ENCODE measurements at regions of chr22 and their contacts with region 1.

Region 1: GRCh38 chr22:19218541-19219233 is 40.2 kb upstream of the SLC25A1 start:
- DNase-seq: peak in 2 of 5 donors; percentile 20 to 46
- ATAC-seq: peak; percentile 66 to 87 (median 84)
- H3K4me3 ChIP-seq: no peak overlapping the region
- H3K27ac ChIP-seq: peak overlapping the region in 11 of 12 donors; percentile 19 to 83 (median 63)
- H3K4me1 ChIP-seq: peaks cover 2 to 24% (median 10%) of the 10 kb centered on the region in 12 donors
- H3K27me3 ChIP-seq: no peaks in the 10 kb centered on the region
- CTCF ChIP-seq: no peak
- POLR2A ChIP-seq: no peak

Region 2: GRCh38 chr22:19143967-19144400 is 74.7 kb before region 1 on chr22:
- intact Hi-C with region 1: loop called in 1 of 10 experiments (anchors 5 kb)
- DNase-seq: no peak
- ATAC-seq: no peak
- H3K4me3 ChIP-seq: peak overlapping the region; percentile 61 to 94 (median 80)
- H3K27ac ChIP-seq: peak overlapping the region in 11 of 12 donors; percentile 3 to 86 (median 78)
- H3K4me1 ChIP-seq: peaks cover 0 to 15% (median 9%) of the 10 kb centered on the region in 12 donors
- H3K27me3 ChIP-seq: peaks cover 6 to 18% (median 13%) of the 10 kb centered on the region in 9 donors
- CTCF ChIP-seq: no peak
- POLR2A ChIP-seq: no peak

Region 3: DNA sequence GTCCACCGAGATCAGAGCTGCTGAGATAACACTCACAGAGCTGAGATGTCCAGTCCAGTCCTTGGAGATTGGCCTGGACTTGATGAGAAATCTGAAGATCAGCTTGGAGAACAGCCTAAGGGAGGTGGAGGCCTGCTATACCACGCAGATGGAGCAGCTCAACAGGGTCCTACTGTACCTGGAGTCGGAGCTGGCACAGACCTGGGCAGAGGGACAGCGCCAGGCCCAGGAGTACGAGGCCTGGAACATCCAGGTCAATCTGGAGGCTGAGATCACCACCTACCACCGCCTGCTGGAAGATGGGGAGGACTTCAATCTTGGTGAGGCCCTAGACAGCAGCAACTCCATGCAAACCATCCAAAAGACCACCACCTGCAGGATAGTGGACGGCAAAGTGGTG is 39.7 kb after region 1 on chr22:
- intact Hi-C with region 1: loop called in 1 of 10 experiments (anchors 5 kb)
- DNase-seq: no peak
- ATAC-seq: no peak
- H3K4me3 ChIP-seq: no peak overlapping the region
- H3K27ac ChIP-seq: no peak overlapping the region
- H3K4me1 ChIP-seq: peaks cover 0 to 17% (median 3%) of the 10 kb centered on the region in 12 donors
- H3K27me3 ChIP-seq: no peaks in the 10 kb centered on the region
- CTCF ChIP-seq: no peak
- POLR2A ChIP-seq: no peak

Region 4: DNA sequence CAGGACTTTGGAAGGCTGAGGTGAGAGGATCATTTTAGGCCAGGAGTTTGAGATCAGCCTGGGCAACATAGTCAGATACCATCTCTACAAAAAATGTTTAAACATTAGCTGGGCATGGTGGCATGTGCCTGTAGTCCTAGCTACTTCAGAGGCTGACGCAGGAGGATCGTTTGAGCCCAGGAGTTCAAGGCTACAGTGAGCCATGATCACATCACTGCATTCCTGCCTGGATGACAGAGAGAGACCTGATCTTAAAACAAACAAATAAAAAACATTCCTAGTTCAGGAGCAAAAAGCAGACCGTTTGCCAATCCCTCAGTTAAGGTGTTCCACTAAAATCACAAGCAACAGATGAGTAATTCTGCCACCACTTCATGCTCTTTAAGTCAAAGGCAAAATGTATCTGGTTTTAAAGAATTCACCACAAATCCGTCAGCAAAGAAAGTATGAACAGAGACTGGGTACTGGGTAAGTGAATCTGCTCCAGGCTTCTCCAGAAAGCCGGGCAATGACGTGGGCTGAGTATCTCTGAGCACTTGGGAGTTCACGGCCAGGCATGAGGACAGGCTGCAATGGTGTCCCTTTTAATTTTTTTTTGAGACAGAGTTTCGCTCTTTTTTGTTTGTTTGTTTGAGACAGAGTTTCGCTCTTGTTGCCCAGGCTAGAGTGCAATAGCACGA is 53.3 kb after region 1 on chr22:
- intact Hi-C with region 1: loop called in 1 of 10 experiments (anchors 5 kb)
- DNase-seq: no peak
- ATAC-seq: no peak
- H3K4me3 ChIP-seq: no peak overlapping the region
- H3K27ac ChIP-seq: no peak overlapping the region
- H3K4me1 ChIP-seq: peaks cover 0 to 11% (median 4%) of the 10 kb centered on the region in 12 donors
- H3K27me3 ChIP-seq: no peaks in the 10 kb centered on the region
- CTCF ChIP-seq: no peak
- POLR2A ChIP-seq: no peak

Region 5: GRCh38 chr22:19291580-19292457 is 73.1 kb after region 1 on chr22 and contains the start of gene CLTCL1:
- intact Hi-C with region 1: loop called in 3 of 10 experiments (anchors 2 to 5 kb)
- DNase-seq: peak; percentile 86 to 93 (median 89)
- ATAC-seq: peak; percentile 65 to 94 (median 88)
- H3K4me3 ChIP-seq: peak within 1 kb of the TSS; percentile 62 to 100 (median 92)
- H3K27ac ChIP-seq: peak within 1 kb of the TSS; percentile 64 to 93 (median 82)
- H3K4me1 ChIP-seq: peaks cover 0 to 49% (median 24%) of the 10 kb centered on the region in 12 donors
- H3K27me3 ChIP-seq: no peaks in the 10 kb centered on the region
- CTCF ChIP-seq: no peak
- POLR2A ChIP-seq: peak in 1 of 2 donors; percentile 70
- total RNA-seq, gene CLTCL1: 7.6 to 20.9 (median 10.4) TPM

Measured in heart left ventricle (tissue), 16 donors.